ENCODE measurements at regions of chr1 and their contacts with region 1.

Region 1: GRCh38 chr1:83931658-83932253 is 67.2 kb downstream of the TTLL7 start:
- DNase-seq: no peak
- ATAC-seq: peak; percentile 88

Region 2: GRCh38 chr1:83990749-83991148 is 59.0 kb after region 1 on chr1:
- intact Hi-C with region 1: no loop called
- DNase-seq: no peak
- ATAC-seq: no peak

Region 3: DNA sequence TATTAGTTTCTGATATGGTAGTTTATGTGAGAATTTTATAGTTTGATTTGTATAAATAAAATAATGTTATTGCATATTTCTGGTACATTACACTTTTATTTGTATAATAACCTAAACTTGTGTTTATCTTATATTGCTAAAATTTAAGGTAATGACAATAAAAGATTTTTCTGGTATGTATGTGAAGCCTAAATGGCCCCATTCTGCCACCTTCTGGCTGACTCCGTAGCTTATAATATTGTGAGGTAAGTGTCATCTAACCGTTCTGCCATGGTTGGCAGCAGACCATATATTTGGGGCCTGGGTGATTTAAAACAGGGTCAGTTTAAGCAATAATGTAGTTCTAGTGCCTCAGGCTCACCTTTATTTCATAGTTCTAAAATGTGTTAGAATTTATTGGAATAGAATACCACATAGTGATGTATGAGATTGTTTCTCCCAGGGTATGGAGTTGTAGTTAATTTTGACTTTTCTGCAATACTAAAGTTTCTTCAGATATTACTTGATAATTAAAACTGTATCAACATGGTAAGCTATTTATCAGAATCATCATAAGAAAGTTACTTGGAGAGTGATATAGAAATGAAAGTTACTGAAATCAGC is 191.1 kb after region 1 on chr1:
- intact Hi-C with region 1: loop called (anchors 2 kb)
- DNase-seq: peak; percentile 44
- ATAC-seq: peak; percentile 77